Cardiac septum (tissue), 1 donor: ENCODE measurements at regions of chr3 and their contacts with region 1.

Region 1: GRCh38 chr3:71305231-71306206 is 278.0 kb downstream of the FOXP1 start:
- DNase-seq: no peak

Region 2: DNA sequence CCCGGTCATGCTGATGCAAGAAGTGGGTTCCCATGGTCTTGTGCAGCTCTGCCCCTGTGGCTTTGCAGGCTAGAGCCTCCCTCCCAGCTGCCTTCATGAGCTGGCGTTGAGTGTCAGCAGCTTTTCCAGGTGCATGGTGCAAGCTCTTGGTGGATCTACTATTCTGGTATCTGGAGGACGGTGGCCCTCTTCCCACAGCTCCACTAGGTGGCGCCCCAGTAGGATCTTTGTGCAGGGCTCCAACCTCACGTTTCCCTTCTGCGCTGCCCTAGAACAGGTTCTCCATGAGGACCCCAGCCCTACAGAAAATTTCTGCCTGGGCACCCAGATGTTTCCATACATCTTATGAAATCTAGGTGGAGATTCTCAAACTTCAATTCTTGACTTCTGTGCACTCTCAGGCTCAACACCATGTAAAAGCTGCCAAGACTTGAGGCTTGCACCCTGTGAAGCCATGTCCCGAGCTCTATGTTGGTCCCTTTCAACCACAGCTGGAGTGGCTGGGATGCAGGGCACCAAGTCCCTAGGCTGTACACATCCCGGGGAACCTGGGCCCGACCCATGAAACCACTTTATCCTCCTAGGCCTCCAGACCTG is 754.7 kb before region 1 on chr3:
- intact Hi-C with region 1: loop called (anchors 5 kb)
- DNase-seq: no peak

Region 3: GRCh38 chr3:71006810-71007785 is 298.4 kb before region 1 on chr3:
- intact Hi-C with region 1: loop called (anchors 2 kb)
- DNase-seq: no peak

Region 4: DNA sequence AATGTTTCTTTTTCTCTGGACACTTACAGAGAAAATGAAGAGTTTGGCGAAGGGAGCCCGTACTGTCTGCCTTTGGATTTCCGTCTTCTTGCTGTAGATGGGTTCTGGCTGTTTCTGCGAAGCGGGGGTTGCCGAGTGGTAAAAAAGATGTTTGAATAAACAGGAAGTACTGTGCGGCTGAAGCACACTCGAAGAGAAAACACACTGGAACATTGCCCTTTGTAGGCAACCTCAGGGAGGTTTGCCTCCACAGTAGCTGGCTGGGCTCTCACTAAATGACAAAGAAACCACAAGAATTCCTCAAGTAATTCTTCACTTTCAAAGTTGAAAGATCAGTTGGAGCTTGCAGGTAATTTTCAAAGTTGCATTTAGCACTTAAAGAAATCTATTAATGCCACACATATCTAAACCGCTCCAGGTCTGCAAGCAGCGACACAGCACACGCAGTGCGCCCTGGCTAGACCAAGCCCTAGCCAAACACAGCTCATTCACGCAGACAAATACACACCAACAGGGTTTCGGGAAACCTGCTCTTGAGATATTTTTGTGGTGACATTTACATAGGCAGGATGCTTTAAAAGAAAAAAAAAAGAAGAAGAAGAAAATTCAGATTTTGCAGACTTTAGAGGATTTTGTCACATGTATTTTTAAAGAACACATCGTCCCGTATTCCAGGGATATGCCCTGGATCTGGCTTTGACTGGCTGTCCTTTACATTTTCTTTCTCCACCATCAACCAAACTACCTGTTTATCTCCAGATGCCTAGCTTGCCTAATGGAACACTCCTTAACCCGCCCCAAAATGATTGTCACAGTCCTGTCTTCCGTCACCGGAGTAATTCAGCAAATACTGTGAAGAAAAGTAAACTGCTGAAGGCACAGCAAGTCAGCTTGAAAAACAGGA is 174.8 kb before region 1 on chr3:
- intact Hi-C with region 1: loop called (anchors 10 kb)
- DNase-seq: peak; percentile 86

Region 5: DNA sequence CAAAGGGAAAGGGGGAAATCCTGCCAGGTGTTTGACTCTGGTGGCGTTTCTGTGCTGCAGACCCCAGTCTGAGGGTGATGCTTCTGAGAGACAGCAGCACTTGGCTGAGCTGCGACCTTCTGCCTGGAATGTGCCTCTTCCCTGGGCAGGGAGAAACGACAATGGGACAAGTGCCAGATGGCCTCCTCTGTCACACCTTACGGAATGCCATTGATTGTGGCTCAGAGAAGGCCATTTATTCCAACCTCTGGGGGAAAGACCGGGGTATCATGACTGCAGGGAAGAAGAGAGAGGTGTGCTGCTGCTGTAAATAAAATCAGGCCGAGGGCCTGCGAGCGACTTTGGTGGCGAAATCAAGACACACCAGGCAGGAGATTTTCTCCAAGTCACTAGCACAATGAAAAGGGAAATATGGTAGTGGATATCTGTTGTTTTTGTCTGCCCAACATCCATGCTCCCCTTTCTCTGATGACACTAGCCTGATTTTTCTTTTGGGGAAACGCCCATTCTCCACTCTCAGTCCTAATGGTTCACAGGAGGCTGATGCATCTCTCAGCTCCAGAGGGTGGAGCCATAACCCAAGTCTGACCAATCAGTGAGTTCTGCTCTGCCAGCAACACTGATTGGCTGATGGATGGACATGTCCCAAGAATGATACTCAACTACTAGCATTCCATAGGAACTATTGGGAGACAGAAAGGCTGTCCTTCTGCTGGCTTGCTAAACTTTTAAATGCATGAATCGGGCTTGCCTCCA is 58.1 kb before region 1 on chr3:
- intact Hi-C with region 1: loop called (anchors 5 kb)
- DNase-seq: no peak

Region 6: GRCh38 chr3:71262364-71263265 is 42.9 kb before region 1 on chr3:
- intact Hi-C with region 1: no loop called
- DNase-seq: no peak

Region 7: GRCh38 chr3:71345429-71346040 is 40.0 kb after region 1 on chr3:
- intact Hi-C with region 1: no loop called
- DNase-seq: no peak